IMR-90 (cell line): ENCODE measurements at regions of chr10 and their contacts with region 1.

Region 1: GRCh38 chr10:21634599-21635365 is 100.8 kb downstream of the MLLT10 start:
- DNase-seq: peak; percentile 5
- ATAC-seq: peak; percentile 57
- H3K4me3 ChIP-seq: no peak overlapping the region
- H3K27ac ChIP-seq: no peak overlapping the region
- H3K4me1 ChIP-seq: peaks cover 3% of the 10 kb centered on the region; the same call in 1 of the 2 replicates
- H3K27me3 ChIP-seq: no peaks in the 10 kb centered on the region
- CTCF ChIP-seq: no peak
- POLR2A ChIP-seq: no peak
- RAD21 ChIP-seq: no peak

Region 2: GRCh38 chr10:19730167-19730906 is 1904.4 kb before region 1 on chr10:
- CTCF ChIA-PET with region 1: no interaction called
- POLR2A ChIA-PET with region 1: interaction called, 15 read pairs
- dilution Hi-C with region 1: no loop called
- in situ Hi-C with region 1: no loop called
- intact Hi-C with region 1: no loop called
- DNase-seq: peak; percentile 68
- ATAC-seq: peak; percentile 84
- H3K4me3 ChIP-seq: no peak overlapping the region
- H3K27ac ChIP-seq: peak overlapping the region; percentile 64; the same call in 1 of the 2 replicates
- H3K4me1 ChIP-seq: peaks cover 2% of the 10 kb centered on the region
- H3K27me3 ChIP-seq: no peaks in the 10 kb centered on the region
- CTCF ChIP-seq: no peak
- POLR2A ChIP-seq: no peak
- RAD21 ChIP-seq: no peak

Region 3: GRCh38 chr10:21724695-21725367 is 90.0 kb after region 1 on chr10:
- CTCF ChIA-PET with region 1: no interaction called
- POLR2A ChIA-PET with region 1: no interaction called
- dilution Hi-C with region 1: no loop called
- in situ Hi-C with region 1: no loop called
- intact Hi-C with region 1: loop called (anchors 5 kb)
- DNase-seq: peak; percentile 100
- ATAC-seq: peak; percentile 88
- H3K4me3 ChIP-seq: no peak overlapping the region
- H3K27ac ChIP-seq: no peak overlapping the region
- H3K4me1 ChIP-seq: peaks cover 6% of the 10 kb centered on the region; the same call in 1 of the 2 replicates
- H3K27me3 ChIP-seq: no peaks in the 10 kb centered on the region
- CTCF ChIP-seq: no peak
- POLR2A ChIP-seq: no peak
- RAD21 ChIP-seq: no peak

Region 4: DNA sequence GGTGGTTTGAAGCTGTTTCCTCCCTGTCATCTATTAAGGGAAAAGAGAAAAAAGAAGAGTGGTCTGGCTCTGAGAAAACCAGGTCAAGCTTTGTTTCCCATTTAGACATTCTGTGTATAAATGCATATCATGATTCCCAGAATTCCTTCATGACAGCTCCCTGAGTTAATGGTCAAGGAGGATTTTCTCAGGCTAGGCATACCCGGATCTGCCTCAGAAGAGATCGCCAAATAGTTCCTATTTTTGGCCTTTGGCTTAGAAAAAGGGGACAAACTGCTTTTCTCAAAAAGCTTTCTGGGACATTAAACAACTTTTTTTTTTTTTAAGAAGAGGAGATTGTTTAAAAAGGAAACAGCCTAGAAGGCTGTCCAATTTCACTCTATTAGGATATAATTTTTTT is 1133.1 kb after region 1 on chr10:
- CTCF ChIA-PET with region 1: no interaction called
- POLR2A ChIA-PET with region 1: interaction called, 13 read pairs
- dilution Hi-C with region 1: no loop called
- in situ Hi-C with region 1: no loop called
- intact Hi-C with region 1: no loop called
- DNase-seq: no peak
- ATAC-seq: no peak
- H3K4me3 ChIP-seq: no peak overlapping the region
- H3K27ac ChIP-seq: no peak overlapping the region
- H3K4me1 ChIP-seq: no peaks in the 10 kb centered on the region
- H3K27me3 ChIP-seq: no peaks in the 10 kb centered on the region; the same call in 1 of the 2 replicates
- CTCF ChIP-seq: no peak
- POLR2A ChIP-seq: no peak
- RAD21 ChIP-seq: no peak